ENCODE measurements at regions of chr17 and their contacts with region 1.

Region 1: DNA sequence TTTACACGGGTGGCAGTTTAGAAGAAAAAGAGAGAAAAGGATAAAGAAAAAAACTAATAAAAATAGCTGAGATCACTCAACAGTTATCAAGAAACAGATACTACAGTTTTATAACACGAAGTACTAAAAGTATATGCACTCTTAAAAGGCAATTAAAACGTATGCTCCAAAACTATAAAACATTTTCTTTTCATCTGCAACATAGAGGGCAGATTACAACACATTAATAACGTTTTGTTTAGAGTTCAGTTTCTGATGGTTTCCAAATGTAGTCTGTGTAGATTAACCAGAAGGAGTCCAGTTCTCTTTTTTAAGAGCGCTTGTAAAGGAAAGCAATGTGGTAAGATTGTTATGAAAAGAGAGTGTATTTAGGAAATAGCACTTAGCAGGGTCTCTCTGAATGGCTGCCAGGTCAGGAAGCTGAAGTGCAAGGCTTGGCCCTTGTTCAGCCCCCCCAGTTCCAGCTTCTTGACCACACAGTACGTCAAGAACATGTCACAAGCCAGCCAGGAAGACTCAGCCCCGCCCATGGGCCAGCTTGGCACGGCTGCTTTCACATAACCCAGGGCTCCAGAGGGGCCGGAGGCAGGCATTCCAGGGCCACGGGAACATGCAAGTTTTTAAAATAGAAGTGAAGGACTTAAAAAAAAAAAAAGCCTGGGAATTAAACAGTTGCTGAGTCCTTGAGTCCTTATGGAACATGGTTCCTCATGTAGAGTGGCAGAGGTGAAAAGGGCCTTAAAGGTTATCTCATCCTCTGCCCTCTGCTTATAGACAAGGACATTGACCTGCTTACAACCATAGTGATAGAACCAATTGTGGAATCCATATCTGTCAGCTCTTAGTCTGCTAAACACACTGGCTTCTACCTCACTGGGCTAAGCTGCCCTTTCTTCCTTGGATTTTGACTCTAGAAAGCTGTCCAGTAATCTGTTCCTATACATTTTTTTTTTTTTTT is 147.4 kb upstream of the TBX2 start:
- DNase-seq: peak; percentile 96 to 98 (median 97)
- ATAC-seq: peak; percentile 98
- H3K4me3 ChIP-seq: no peak overlapping the region
- H3K27ac ChIP-seq: peak overlapping the region; percentile 83
- H3K4me1 ChIP-seq: peaks cover 7% of the 10 kb centered on the region
- H3K27me3 ChIP-seq: no peaks in the 10 kb centered on the region

Region 2: DNA sequence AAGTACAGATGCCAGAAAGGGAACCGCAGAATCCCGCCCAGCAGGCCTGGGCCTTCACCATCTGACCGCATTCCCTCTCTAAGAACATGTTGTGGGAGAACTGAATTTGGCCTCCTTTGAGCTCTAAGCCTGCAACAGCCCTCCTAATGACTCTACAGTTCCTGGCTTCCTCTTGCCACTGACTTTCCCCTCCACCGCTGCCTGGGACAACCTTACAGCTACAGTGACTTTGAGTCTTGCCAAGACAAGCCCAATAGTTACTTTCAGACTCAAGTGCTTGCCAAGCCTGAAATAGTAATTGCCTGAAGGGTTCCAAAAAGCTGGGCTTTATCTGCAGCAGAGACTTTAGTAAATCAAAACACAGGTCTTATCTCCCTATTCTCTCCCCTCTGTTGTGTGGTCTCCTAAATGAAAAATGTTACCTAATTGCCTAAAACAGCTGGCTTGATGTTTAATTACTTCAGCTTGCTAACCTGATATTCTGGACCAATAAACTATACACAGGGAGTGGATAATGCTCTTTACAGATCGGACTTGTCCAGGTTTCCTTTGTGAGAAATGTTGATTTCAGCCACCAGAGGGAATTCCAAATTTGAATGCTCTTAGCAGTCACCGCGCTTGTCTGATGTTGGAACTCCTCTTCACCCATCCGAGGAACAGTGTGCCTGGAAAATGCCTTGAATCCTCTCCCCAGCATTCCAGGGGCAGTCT is 62.3 kb after region 1 on chr17:
- intact Hi-C with region 1: loop called in 1 of 4 experiments (anchors 10 kb)
- DNase-seq: peak; percentile 75 to 87 (median 82)
- ATAC-seq: peak; percentile 94 to 95
- H3K4me3 ChIP-seq: no peak overlapping the region
- H3K27ac ChIP-seq: peak overlapping the region; percentile 78
- H3K4me1 ChIP-seq: peaks cover 10% of the 10 kb centered on the region
- H3K27me3 ChIP-seq: no peaks in the 10 kb centered on the region

Region 3: GRCh38 chr17:61338000-61338798 is 86.0 kb after region 1 on chr17:
- intact Hi-C with region 1: no loop called
- DNase-seq: peak; percentile 41 to 65 (median 62)
- ATAC-seq: peak in 1 of 2 donors; percentile 61
- H3K4me3 ChIP-seq: no peak overlapping the region
- H3K27ac ChIP-seq: peak overlapping the region; percentile 62
- H3K4me1 ChIP-seq: peaks cover 9% of the 10 kb centered on the region
- H3K27me3 ChIP-seq: no peaks in the 10 kb centered on the region

Region 4: DNA sequence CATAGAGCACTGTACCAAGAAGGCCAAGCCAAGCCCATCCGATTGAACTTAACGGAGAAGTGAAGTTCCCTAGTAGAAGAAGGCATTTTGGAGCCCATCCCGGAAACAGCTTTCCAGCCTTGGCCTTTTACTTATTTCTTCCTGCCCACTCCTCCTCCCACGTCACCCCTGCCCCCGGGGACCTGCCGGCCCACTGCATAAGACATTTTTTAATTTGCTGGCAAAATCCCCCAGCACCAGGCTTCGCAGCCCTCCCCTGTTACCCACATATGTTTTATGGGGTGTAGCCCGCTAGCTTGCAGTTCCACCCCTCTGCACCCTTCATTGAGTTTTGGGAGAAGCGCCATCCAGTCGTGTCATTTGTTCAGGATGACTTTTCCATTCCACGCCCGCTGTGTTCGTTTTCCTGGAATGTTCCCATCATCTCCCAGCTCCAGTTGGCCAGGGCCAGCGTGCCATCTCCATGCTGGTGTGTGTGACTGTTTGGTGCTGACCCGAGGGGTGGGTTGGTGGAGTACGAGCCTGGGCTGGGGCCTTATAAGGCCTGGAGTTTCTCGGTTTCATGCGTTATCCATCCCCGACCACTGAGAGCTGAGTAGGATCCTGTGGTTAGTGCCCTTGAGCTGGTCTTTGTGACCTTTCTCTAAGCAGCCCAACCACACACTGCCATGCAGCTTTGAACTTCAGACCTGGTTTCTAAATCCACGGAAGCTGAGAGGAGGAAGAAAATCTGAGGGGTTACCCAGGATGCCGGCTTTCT is 127.4 kb after region 1 on chr17:
- intact Hi-C with region 1: loop called in 1 of 4 experiments (anchors 10 kb)
- DNase-seq: no peak
- ATAC-seq: peak in 1 of 2 donors; percentile 25
- H3K4me3 ChIP-seq: no peak overlapping the region
- H3K27ac ChIP-seq: no peak overlapping the region
- H3K4me1 ChIP-seq: no peaks in the 10 kb centered on the region
- H3K27me3 ChIP-seq: no peaks in the 10 kb centered on the region